ENCODE measurements at regions of chr20 and their contacts with region 1.

Region 1: GRCh38 chr20:53750827-53751619 is 157.4 kb upstream of the ZNF217 start:
- DNase-seq: no peak
- H3K4me3 Mint-ChIP-seq: no peak overlapping the region
- H3K27ac Mint-ChIP-seq: peak overlapping the region; percentile 83
- H3K4me1 Mint-ChIP-seq: peaks cover 29% of the 10 kb centered on the region
- H3K27me3 Mint-ChIP-seq: no peaks in the 10 kb centered on the region
- CTCF ChIP-seq: no peak

Region 2: DNA sequence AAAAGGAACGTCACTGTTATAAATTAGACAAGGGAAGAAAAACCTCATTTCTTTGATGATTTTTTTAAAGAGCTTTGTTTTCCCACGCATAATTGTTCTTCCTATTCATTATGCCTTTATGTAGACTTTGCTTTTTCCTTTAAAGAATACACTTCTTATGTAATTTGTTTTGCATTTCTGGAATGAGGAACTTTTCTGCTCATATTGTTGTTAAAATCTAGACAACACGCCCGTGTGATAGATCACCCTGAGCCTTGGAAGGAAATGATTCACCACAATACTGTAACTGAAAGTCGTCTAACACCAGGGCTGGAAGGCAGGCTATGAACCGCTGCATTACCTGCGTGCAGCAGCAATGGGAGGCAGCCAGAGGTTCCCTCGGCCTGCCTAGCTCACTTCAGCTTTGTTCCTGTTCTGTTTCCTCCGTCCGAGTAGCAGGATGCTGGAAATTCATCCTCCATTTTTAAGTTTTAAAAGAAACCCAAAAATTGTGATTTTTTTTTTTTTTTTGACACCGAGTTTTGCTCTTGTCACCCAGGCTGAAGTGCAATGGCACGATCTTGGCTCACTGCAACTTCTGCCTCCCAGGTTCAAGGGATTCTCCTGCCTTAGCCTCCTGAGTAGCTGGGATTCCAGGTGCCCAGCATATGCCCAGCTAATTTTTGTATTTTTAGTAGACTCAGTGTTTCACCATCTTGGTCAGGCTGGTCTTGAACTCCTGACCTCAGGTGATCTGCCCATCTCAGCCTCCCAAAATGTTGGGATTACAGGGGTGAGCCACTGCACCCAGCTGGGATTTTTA is 107.8 kb before region 1 on chr20:
- CTCF ChIA-PET with region 1: no interaction called
- POLR2A ChIA-PET with region 1: interaction called, 10 read pairs
- intact Hi-C with region 1: no loop called
- DNase-seq: peak; percentile 79
- H3K4me3 Mint-ChIP-seq: peak overlapping the region; percentile 51
- H3K27ac Mint-ChIP-seq: peak overlapping the region; percentile 97
- H3K4me1 Mint-ChIP-seq: peaks cover 12% of the 10 kb centered on the region
- H3K27me3 Mint-ChIP-seq: no peaks in the 10 kb centered on the region
- CTCF ChIP-seq: no peak

Region 3: DNA sequence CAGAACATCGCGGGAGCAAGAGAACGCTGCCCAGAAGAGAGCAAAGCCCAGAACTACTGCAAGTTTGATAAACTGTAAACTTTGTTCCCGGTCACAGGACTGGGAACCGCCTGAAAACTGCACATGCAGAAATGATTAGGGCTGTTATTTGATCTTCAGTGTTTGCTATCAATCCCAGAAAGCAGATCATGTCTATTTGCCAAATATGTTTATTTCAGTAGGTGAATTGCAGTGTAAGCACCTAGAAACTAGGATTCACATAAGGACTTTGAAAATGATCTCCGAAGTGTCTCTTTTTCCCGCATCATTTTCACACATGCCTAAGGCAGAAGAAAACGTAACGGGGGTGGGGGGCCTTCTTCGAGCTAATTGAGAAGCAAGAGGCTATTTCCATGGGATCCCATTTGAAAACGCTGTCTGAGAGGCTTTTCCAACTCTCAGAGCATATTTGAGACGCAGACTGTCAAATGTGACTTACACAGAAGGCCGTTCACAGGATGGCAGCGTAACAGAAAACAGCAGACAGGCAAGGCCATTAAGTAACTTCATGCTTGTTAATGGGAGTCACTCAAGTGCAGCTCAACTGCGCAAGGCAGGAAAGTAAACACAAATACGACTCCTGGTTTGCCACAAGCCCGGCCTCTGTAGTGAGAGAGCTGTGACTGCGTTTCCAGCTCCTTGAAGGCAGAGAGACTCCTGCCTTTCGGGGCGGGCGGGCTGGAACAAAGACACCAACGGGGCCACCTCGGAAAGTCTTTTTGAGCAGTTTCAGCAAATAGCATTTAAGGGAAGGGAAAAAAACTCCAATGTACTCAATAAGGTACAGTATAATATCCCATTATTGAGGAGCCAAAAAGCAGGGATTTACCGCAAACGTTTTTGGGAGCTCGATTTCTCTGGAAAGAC is 12.7 kb before region 1 on chr20:
- CTCF ChIA-PET with region 1: interaction called, 4 read pairs
- POLR2A ChIA-PET with region 1: interaction called, 20 read pairs
- intact Hi-C with region 1: no loop called
- DNase-seq: no peak
- H3K4me3 Mint-ChIP-seq: no peak overlapping the region
- H3K27ac Mint-ChIP-seq: no peak overlapping the region
- H3K4me1 Mint-ChIP-seq: peaks cover 32% of the 10 kb centered on the region
- H3K27me3 Mint-ChIP-seq: no peaks in the 10 kb centered on the region
- CTCF ChIP-seq: no peak

Region 4: GRCh38 chr20:53773792-53774401 is 22.9 kb after region 1 on chr20:
- CTCF ChIA-PET with region 1: interaction called, 6 read pairs
- POLR2A ChIA-PET with region 1: interaction called, 15 read pairs
- intact Hi-C with region 1: no loop called
- DNase-seq: peak; percentile 79
- H3K4me3 Mint-ChIP-seq: no peak overlapping the region
- H3K27ac Mint-ChIP-seq: peak overlapping the region; percentile 92
- H3K4me1 Mint-ChIP-seq: peaks cover 21% of the 10 kb centered on the region
- H3K27me3 Mint-ChIP-seq: no peaks in the 10 kb centered on the region
- CTCF ChIP-seq: no peak

Region 5: GRCh38 chr20:53813636-53814429 is 62.8 kb after region 1 on chr20:
- CTCF ChIA-PET with region 1: no interaction called
- POLR2A ChIA-PET with region 1: no interaction called
- intact Hi-C with region 1: no loop called
- DNase-seq: no peak
- H3K4me3 Mint-ChIP-seq: no peak overlapping the region
- H3K27ac Mint-ChIP-seq: no peak overlapping the region
- H3K4me1 Mint-ChIP-seq: no peaks in the 10 kb centered on the region
- H3K27me3 Mint-ChIP-seq: no peaks in the 10 kb centered on the region
- CTCF ChIP-seq: no peak